HCT116 (cell line): ENCODE measurements at regions of chr16 and their contacts with region 1.

Region 1: DNA sequence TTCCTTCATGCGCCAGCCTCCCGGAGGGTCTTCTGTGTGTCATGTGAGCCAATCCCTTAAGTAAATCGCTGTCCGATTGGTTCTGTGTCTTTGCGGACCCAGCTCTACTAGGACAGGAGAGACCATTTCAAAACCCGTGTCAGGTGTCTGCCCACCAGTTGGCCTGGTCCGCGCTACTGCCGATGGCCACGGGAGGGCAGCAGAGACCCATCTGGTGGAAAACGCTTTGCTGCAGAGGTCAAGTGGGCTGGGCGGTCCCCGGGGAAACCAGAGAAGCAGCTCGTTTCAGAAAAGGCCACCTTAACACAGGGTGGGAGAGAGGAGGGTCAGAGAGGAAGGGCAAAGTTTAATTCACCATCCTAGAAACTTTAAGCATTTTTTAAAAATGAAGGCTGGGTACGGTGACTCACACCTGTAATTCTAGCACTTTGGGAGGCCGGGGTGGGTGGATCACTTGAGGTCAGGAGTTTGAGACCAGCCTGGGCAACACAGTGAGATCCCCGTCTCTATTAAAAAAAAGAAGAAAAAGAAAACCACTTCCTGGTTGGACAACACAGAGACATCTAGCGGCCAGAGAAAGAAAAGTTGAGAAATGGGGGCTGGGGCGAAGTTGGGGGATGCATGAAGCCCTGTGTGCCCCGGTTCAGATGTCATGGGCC is 2.8 kb upstream of the CIBAR2 start:
- DNase-seq: peak; percentile 85
- ATAC-seq: peak; percentile 89
- H3K4me3 ChIP-seq: peak overlapping the region; percentile 23 to 27
- H3K27ac ChIP-seq: peak overlapping the region; percentile 48
- H3K4me1 ChIP-seq: peaks cover 11 to 24% of the 10 kb centered on the region in 2 experiments; a peak in 3 of 4 replicates
- H3K27me3 ChIP-seq: no peaks in the 10 kb centered on the region
- CTCF ChIP-seq: peak; percentile 98 to 100 (median 100)
- POLR2A ChIP-seq: no peak
- RAD21 ChIP-seq: peak; percentile 100

Region 2: DNA sequence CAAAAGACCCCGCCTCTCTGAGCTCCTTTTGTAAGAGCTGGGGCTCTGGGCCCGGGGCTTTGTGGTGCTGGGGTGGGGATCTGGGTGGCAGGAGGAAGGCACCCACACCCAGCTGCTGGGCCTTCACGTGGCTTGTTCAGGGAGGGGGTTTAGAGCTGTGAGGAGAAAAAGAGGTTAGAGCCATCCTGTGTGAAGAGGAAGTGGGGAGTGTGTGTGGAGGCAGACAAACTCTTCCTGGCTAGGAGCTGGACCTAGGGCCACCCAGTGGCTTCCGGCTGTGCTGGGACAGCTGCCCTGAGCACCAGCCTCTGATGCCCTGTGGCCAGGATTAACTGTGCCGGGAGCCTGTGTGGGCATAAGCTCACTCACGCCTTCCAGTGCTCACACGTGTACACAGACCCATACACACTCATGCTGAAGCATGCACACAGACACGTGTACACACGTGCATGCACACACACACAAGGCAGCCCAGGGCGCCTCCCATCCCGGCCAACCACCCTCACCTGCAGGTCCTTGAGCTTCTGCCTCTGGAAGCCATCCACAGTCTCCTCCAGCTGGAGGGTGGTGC is 10.1 kb before region 1 on chr16:
- CTCF ChIA-PET with region 1: interaction called, 19 read pairs
- POLR2A ChIA-PET with region 1: no interaction called
- RAD21 ChIA-PET with region 1: no interaction called
- intact Hi-C with region 1: no loop called
- DNase-seq: no peak
- ATAC-seq: no peak
- H3K4me3 ChIP-seq: no peak overlapping the region
- H3K27ac ChIP-seq: no peak overlapping the region
- H3K4me1 ChIP-seq: no peaks in the 10 kb centered on the region
- H3K27me3 ChIP-seq: no peaks in the 10 kb centered on the region
- CTCF ChIP-seq: no peak
- POLR2A ChIP-seq: no peak
- RAD21 ChIP-seq: no peak

Region 3: DNA sequence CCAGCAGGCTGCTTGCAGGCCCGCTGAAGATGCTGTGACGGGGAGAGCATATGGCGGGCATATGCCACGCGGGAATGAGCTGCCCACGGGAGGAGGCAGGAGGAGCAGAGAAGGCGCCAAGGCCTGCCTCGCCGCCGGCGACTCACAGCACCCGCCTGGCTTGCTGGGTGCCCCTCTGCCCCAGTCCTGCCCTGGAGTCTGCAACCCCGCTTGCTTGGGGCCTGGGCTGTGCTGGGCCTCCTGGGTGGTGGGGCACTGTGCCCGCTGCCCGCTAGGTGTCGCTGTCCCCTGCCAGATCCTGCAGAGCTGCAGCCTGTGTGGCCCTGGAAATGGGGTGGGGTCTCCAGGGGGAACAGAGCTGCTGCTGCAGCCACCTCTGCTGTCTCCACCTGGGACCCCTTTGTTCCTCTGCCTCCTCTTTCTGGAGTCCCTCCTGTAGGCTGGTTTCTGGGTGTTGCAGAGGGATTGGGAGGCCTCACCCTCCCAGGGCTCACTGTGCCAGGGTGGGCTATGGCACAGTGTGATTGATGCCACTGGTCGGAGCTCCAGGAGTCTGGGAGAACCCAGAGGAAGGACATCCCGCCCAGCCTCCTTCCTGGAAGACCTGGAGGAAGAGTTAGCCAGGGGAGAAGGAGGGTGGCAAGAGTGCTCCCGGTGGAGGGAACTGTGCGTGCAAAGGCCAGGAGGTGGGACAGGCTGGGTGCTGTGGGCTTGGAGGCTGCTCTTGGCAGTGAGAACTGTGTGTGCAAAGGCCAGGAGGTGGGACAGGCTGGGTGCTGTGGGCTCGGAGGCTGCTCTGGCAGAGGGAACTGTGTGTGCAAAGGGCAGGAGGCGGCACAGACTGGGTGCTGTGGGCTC is 138.3 kb after region 1 on chr16:
- CTCF ChIA-PET with region 1: interaction called, 16 read pairs
- POLR2A ChIA-PET with region 1: no interaction called
- RAD21 ChIA-PET with region 1: interaction called in 1 of 2 experiments, 3 read pairs
- intact Hi-C with region 1: loop called (anchors 5 kb)
- DNase-seq: no peak
- ATAC-seq: peak; percentile 96
- H3K4me3 ChIP-seq: no peak overlapping the region
- H3K27ac ChIP-seq: no peak overlapping the region; the same call in 1 of the 2 replicates
- H3K4me1 ChIP-seq: peaks cover 9 to 23% of the 10 kb centered on the region in 2 experiments
- H3K27me3 ChIP-seq: no peaks in the 10 kb centered on the region
- CTCF ChIP-seq: peak; percentile 86 to 100 (median 100)
- POLR2A ChIP-seq: no peak
- RAD21 ChIP-seq: peak; percentile 63

Region 4: GRCh38 chr16:85305996-85306792 is 191.2 kb after region 1 on chr16:
- CTCF ChIA-PET with region 1: interaction called, 7 read pairs
- POLR2A ChIA-PET with region 1: no interaction called
- RAD21 ChIA-PET with region 1: no interaction called
- intact Hi-C with region 1: loop called (anchors 2 kb)
- DNase-seq: peak; percentile 65
- ATAC-seq: peak; percentile 80
- H3K4me3 ChIP-seq: peak overlapping the region; percentile 15 to 28
- H3K27ac ChIP-seq: peak overlapping the region; percentile 29
- H3K4me1 ChIP-seq: peaks cover 45 to 55% of the 10 kb centered on the region in 2 experiments
- H3K27me3 ChIP-seq: no peaks in the 10 kb centered on the region
- CTCF ChIP-seq: no peak
- POLR2A ChIP-seq: peak; percentile 46
- RAD21 ChIP-seq: no peak

Region 5: GRCh38 chr16:85420501-85421337 is 305.7 kb after region 1 on chr16:
- CTCF ChIA-PET with region 1: interaction called, 12 read pairs
- POLR2A ChIA-PET with region 1: no interaction called
- RAD21 ChIA-PET with region 1: no interaction called
- intact Hi-C with region 1: no loop called
- DNase-seq: peak; percentile 49
- ATAC-seq: peak; percentile 76
- H3K4me3 ChIP-seq: no peak overlapping the region
- H3K27ac ChIP-seq: no peak overlapping the region
- H3K4me1 ChIP-seq: peaks cover 8 to 16% of the 10 kb centered on the region in 2 experiments
- H3K27me3 ChIP-seq: no peaks in the 10 kb centered on the region
- CTCF ChIP-seq: peak; percentile 100
- POLR2A ChIP-seq: no peak
- RAD21 ChIP-seq: peak; percentile 98

Region 6: DNA sequence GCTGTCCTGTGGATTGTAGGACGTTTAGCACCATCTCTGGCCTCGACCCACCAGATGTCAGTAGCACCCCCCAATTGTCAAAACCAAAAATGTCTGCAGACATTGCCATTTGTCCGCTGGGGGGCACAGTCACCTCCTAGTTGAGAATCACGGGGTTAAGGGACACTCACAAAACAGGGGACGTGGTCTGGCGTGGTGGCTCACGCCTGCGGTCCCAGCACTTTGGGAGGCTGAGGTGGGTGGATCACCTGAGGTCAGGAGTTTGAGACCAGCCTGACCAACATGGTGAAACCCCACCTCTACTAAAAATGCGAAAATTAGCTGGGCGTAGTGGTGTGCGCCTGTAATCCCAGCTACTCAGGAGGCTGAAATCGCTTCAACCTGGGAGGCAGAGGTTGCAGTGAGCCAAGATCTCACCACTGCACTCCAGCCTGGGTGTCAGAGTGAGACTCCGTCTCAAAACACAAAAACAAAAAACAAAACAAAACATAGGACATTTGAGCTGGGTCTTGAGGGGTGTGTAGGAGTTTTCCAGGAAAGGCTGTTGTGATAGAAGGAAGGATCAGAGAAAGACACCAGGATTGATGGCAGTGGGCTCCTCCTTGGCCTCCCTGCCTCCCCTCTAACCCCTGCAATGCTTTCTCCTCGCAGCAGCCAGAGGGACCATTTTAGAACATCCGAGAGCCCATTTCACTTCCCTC is 326.3 kb after region 1 on chr16:
- CTCF ChIA-PET with region 1: no interaction called
- POLR2A ChIA-PET with region 1: no interaction called
- RAD21 ChIA-PET with region 1: no interaction called
- intact Hi-C with region 1: no loop called
- DNase-seq: peak; percentile 13
- ATAC-seq: peak; percentile 44
- H3K4me3 ChIP-seq: no peak overlapping the region
- H3K27ac ChIP-seq: no peak overlapping the region
- H3K4me1 ChIP-seq: no peaks in the 10 kb centered on the region
- H3K27me3 ChIP-seq: no peaks in the 10 kb centered on the region
- CTCF ChIP-seq: peak; percentile 41 to 98 (median 43)
- POLR2A ChIP-seq: no peak
- RAD21 ChIP-seq: peak; percentile 83

Region 7: GRCh38 chr16:85615852-85616606 is 501.0 kb after region 1 on chr16:
- CTCF ChIA-PET with region 1: interaction called, 17 read pairs
- POLR2A ChIA-PET with region 1: no interaction called
- RAD21 ChIA-PET with region 1: no interaction called
- intact Hi-C with region 1: loop called (anchors 1 kb)
- DNase-seq: peak; percentile 48
- ATAC-seq: no peak
- H3K4me3 ChIP-seq: peak overlapping the region; percentile 85 to 91
- H3K27ac ChIP-seq: peak overlapping the region; percentile 90
- H3K4me1 ChIP-seq: peaks cover 18 to 52% of the 10 kb centered on the region in 2 experiments
- H3K27me3 ChIP-seq: no peaks in the 10 kb centered on the region
- CTCF ChIP-seq: peak in 2 of 3 experiments; percentile 99; a peak in 4 of 6 replicates
- POLR2A ChIP-seq: no peak
- RAD21 ChIP-seq: no peak